ENCODE measurements at regions of chr5 and their contacts with region 1.

Region 1: GRCh38 chr5:172770675-172771438 is at the start of gene DUSP1:
- DNase-seq: peak; percentile 100
- ATAC-seq: peak; percentile 71
- H3K4me3 ChIP-seq: peak within 1 kb of the TSS; percentile 84
- H3K27ac ChIP-seq: peak within 1 kb of the TSS; percentile 99
- H3K4me1 ChIP-seq: peaks cover 42% of the 10 kb centered on the region
- H3K27me3 ChIP-seq: no peaks in the 10 kb centered on the region
- CTCF ChIP-seq: peak; percentile 34
- total RNA-seq, gene DUSP1: 382 TPM

Region 2: DNA sequence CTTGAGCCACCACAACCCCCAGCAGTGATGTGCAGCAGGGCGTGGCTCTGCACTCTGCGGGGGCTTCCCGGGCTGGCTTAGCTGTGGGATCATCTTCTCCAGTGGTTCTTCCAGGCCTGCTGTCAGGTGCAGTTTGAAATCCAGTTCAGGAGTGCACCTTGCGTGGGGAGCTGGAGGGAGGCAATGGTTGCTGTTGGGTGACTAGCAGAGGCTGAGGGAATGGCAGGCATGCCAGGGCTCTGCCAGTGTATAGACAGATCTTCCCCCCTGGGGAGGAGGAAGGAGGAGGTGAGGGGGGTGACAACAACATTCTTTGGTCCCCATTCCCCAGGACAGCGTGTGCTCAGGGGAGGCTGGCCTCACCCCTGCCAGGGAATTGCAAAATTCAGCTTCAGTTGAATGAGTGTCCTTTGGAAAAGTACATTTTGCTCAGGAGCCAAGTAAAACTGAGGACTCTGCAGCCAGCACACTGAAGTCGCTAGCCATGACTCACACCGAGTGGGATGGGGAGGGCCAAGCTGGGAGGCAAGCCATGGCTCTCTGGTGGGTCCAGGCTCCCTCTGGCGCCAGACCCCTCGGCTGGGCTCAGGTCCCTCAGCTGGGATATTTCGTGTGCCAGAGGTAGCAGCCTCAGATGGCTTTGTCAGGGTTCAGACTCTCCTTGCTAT is 98.2 kb after region 1 on chr5:
- intact Hi-C with region 1: loop called (anchors 10 kb)
- DNase-seq: peak; percentile 89
- ATAC-seq: peak; percentile 92
- H3K4me3 ChIP-seq: no peak overlapping the region
- H3K27ac ChIP-seq: peak overlapping the region; percentile 87
- H3K4me1 ChIP-seq: peaks cover 76% of the 10 kb centered on the region
- H3K27me3 ChIP-seq: no peaks in the 10 kb centered on the region
- CTCF ChIP-seq: peak; percentile 28

Region 3: DNA sequence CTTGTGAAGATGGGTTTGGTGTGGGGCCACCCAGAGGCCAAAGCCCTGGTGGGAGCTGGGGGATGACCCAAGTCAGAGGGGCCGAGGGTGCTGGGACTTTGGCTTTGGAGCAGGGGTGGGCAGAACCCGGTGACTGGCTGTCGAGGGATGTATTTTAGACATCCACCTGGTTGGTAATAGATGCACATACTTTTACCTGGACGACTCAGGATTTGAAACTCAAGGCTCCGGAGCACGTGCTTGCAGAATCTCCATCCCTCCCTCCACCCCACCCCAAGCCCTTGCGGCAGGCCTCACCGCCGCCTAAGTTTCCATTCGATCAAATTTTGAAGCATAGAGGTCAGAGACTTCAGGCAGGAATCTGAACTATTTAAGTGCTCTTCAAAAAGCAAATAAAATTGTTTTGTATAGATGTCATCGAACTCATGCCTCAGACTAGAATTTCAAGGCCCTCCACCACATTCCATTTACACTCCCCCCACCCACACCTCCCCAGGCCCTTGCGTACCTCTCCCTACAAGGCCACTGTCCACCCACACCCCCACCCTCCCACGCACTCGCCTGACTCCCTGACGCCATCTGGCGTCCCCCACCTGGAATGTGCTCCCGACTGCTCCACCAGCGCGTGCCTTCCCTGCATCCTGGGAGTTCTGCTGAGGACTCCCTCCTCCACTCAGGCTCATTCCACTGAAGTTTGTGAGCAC is 131.8 kb after region 1 on chr5:
- intact Hi-C with region 1: loop called (anchors 10 kb)
- DNase-seq: peak; percentile 93
- ATAC-seq: peak; percentile 82
- H3K4me3 ChIP-seq: no peak overlapping the region
- H3K27ac ChIP-seq: peak overlapping the region; percentile 91
- H3K4me1 ChIP-seq: peaks cover 64% of the 10 kb centered on the region
- H3K27me3 ChIP-seq: no peaks in the 10 kb centered on the region
- CTCF ChIP-seq: peak; percentile 47

Measured in upper lobe of right lung (tissue), 1 donor.